ENCODE measurements at regions of chr10 and their contacts with region 1.

Region 1: DNA sequence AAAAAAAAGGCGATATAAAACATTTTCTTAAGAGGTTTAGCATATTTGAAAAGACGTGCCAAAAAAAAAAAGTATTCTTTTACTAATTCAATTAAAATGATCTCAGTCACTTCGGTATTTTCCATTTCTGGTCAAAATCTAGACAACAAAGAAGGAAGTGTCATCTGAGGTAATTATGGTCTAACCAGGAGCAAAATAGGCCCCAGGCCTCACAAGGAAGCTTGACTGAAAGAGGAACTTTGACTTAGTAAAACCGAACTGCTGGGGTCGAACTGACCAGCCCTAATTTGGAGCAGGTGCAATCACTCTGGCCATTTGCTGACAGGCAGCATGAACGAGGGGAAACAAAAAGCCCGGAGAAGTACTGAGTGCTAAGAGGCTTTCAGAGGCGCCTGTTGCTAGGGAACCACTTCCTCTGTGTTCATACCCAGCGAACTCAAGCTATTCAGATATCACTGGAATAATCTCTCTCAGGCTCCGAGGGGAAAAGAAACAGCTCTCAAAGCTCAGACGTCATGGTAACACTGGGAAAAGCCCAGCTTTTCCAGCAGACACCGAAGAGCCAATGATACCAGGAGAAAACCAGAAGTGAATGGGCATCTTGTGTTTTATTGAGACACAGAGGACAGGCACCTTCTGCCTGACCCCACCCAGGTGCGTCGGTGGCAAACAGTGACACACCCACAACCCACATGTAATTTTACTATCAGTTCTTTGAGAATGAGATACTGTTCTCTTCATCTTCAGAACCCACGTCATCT is 126.5 kb downstream of the FAM107B start:
- DNase-seq: peak; percentile 81
- H3K4me3 Mint-ChIP-seq: peak overlapping the region; percentile 75
- H3K27ac Mint-ChIP-seq: peak overlapping the region; percentile 98
- H3K4me1 Mint-ChIP-seq: peaks cover 77% of the 10 kb centered on the region
- H3K27me3 Mint-ChIP-seq: no peaks in the 10 kb centered on the region

Region 2: GRCh38 chr10:14185316-14186045 is 462.7 kb before region 1 on chr10:
- CTCF ChIA-PET with region 1: no interaction called
- POLR2A ChIA-PET with region 1: no interaction called
- intact Hi-C with region 1: loop called (anchors 5 kb)
- DNase-seq: peak; percentile 77
- H3K4me3 Mint-ChIP-seq: peak overlapping the region; percentile 74
- H3K27ac Mint-ChIP-seq: peak overlapping the region; percentile 98
- H3K4me1 Mint-ChIP-seq: peaks cover 32% of the 10 kb centered on the region
- H3K27me3 Mint-ChIP-seq: peaks cover 31% of the 10 kb centered on the region

Region 3: GRCh38 chr10:14562218-14563075 is 85.7 kb before region 1 on chr10:
- CTCF ChIA-PET with region 1: no interaction called
- POLR2A ChIA-PET with region 1: interaction called, 4 read pairs
- intact Hi-C with region 1: loop called (anchors 1 kb)
- DNase-seq: no peak
- H3K4me3 Mint-ChIP-seq: peak overlapping the region; percentile 49
- H3K27ac Mint-ChIP-seq: peak overlapping the region; percentile 90
- H3K4me1 Mint-ChIP-seq: peaks cover 91% of the 10 kb centered on the region
- H3K27me3 Mint-ChIP-seq: no peaks in the 10 kb centered on the region

Region 4: DNA sequence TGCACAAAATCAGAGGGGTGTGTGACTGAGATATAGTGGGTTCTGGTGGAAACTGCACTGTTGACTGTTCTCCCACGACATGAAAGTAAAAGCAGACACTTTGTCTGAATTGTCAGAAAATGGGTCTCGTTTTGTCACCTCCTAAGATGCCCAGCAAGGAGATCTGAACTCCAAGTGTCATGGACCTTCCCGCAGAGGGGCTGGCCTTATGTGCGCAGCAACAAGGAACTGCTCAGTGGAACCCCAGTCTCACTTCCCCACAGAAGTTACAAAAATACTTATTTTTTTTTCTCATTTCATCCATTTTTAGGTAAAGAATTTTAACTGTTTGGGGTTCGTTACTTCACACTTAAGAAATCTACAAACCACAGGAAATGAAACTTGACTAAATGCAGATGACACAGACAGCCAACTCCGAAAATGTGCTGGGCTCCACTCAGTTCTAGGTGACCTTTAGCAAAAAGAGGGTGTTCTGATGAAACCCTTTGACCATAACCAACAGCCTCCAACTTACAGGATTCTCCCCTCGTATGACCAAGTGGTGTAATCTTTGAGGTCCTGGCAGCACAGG is 11.5 kb after region 1 on chr10:
- CTCF ChIA-PET with region 1: no interaction called
- POLR2A ChIA-PET with region 1: interaction called, 12 read pairs
- intact Hi-C with region 1: loop called (anchors 1 kb)
- DNase-seq: peak; percentile 72
- H3K4me3 Mint-ChIP-seq: peak overlapping the region; percentile 45
- H3K27ac Mint-ChIP-seq: peak overlapping the region; percentile 92
- H3K4me1 Mint-ChIP-seq: peaks cover 77% of the 10 kb centered on the region
- H3K27me3 Mint-ChIP-seq: no peaks in the 10 kb centered on the region

Region 5: GRCh38 chr10:14837757-14838581 is 189.8 kb after region 1 on chr10 and contains the starts of genes CDNF, HSPA14 and MSANTD7:
- CTCF ChIA-PET with region 1: no interaction called
- POLR2A ChIA-PET with region 1: interaction called, 6 read pairs
- intact Hi-C with region 1: loop called (anchors 1 kb)
- DNase-seq: peak; percentile 100
- H3K4me3 Mint-ChIP-seq: peak within 1 kb of the TSS; percentile 93
- H3K27ac Mint-ChIP-seq: peak within 1 kb of the TSS; percentile 94
- H3K4me1 Mint-ChIP-seq: peaks cover 21% of the 10 kb centered on the region
- H3K27me3 Mint-ChIP-seq: no peaks in the 10 kb centered on the region
- total RNA-seq, gene CDNF: 1.6 to 1.8 TPM
- total RNA-seq, gene HSPA14: 31.1 to 31.2 TPM
- total RNA-seq, gene MSANTD7: 16.1 to 18.1 TPM

Region 6: GRCh38 chr10:14954001-14954770 is 306.0 kb after region 1 on chr10 and contains the start of gene DCLRE1C:
- CTCF ChIA-PET with region 1: no interaction called
- POLR2A ChIA-PET with region 1: no interaction called
- intact Hi-C with region 1: loop called (anchors 5 kb)
- DNase-seq: peak; percentile 93
- H3K4me3 Mint-ChIP-seq: peak within 1 kb of the TSS; percentile 91
- H3K27ac Mint-ChIP-seq: peak within 1 kb of the TSS; percentile 96
- H3K4me1 Mint-ChIP-seq: peaks cover 47% of the 10 kb centered on the region
- H3K27me3 Mint-ChIP-seq: no peaks in the 10 kb centered on the region
- total RNA-seq, gene DCLRE1C: 17.2 to 18.3 TPM